MCF 10A (cell line): ENCODE measurements at regions of chr18 and their contacts with region 1.

Region 1: GRCh38 chr18:54444319-54444914 is 86.7 kb downstream of the C18orf54 start:
- DNase-seq: peak; percentile 71
- H3K4me3 Mint-ChIP-seq: no peak overlapping the region
- H3K27ac Mint-ChIP-seq: no peak overlapping the region
- H3K4me1 Mint-ChIP-seq: peaks cover 5% of the 10 kb centered on the region
- H3K27me3 Mint-ChIP-seq: no peaks in the 10 kb centered on the region
- CTCF ChIP-seq: peak; percentile 93

Region 2: DNA sequence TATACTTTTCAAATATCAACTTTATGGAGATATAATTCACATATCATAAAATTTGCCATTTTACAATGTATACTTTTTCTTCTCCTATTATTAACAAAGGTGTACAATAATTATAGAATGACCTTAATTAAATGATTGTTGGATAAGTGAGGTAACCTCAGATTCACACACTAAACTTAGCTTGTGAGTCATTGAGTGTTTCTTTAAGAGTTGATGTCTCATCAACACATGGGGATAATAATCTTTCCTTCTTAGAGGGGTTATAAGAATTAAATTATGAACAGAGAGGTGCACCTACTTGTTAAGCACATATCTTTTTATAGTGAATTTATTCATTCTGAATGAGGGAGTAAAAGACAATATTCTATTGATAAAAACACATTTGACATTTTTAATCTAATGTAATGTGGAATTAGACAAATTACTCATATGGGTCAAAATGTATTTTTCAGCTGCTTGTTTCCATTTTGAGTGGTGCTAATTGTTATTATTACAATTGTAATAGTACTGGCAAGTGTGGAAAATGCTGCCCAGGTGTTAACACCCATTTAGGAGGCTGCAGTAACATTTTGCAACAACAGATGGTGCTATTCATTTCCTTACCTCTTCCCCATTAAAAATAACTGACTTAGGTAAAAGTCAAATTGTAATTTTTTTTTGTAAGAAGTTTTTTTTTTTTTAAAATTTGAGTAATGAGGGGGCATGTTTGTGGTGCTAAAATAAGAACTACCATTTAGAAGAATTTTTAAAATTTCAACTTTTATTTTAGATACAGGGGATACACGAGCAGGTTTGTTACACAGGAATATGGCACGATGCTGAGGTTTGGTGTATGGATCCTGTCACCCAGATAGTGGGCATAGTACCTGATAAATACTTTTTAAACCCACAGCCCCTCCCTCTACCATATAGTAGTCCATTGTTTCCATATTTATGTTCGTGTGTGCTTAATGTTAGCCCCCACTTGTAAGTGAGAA is 114.5 kb after region 1 on chr18:
- CTCF ChIA-PET with region 1: interaction called, 49 read pairs
- POLR2A ChIA-PET with region 1: no interaction called
- intact Hi-C with region 1: loop called (anchors 2 kb)
- DNase-seq: peak; percentile 60
- H3K4me3 Mint-ChIP-seq: no peak overlapping the region
- H3K27ac Mint-ChIP-seq: no peak overlapping the region
- H3K4me1 Mint-ChIP-seq: no peaks in the 10 kb centered on the region
- H3K27me3 Mint-ChIP-seq: no peaks in the 10 kb centered on the region
- CTCF ChIP-seq: peak; percentile 63

Region 3: DNA sequence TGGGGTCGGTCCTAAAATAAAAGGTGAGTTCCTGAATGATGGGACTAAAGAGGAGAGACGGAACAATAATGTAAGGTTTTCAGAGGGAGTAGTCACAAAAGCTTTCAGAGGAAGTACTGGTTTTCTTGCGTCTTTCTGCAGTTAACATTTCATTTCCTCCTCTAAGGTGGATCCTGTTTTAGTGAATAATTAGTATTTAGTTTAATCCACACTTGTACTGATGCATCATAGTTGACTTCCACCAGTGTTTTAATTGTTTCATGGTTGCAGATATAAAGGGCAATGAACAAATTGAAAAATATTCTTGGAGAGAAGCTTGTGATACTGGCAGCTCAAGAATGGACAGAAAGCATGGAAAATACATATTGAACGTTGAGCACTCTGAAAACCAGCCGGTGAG is 146.5 kb after region 1 on chr18 and contains the start of gene DYNAP:
- CTCF ChIA-PET with region 1: no interaction called
- POLR2A ChIA-PET with region 1: no interaction called
- intact Hi-C with region 1: no loop called
- DNase-seq: no peak
- H3K4me3 Mint-ChIP-seq: no peak within 1 kb of the TSS
- H3K27ac Mint-ChIP-seq: no peak within 1 kb of the TSS
- H3K4me1 Mint-ChIP-seq: no peaks in the 10 kb centered on the region
- H3K27me3 Mint-ChIP-seq: peaks cover 1% of the 10 kb centered on the region
- CTCF ChIP-seq: no peak
- total RNA-seq, gene DYNAP: 0.59 and 0.86 TPM in 2 replicates

Region 4: DNA sequence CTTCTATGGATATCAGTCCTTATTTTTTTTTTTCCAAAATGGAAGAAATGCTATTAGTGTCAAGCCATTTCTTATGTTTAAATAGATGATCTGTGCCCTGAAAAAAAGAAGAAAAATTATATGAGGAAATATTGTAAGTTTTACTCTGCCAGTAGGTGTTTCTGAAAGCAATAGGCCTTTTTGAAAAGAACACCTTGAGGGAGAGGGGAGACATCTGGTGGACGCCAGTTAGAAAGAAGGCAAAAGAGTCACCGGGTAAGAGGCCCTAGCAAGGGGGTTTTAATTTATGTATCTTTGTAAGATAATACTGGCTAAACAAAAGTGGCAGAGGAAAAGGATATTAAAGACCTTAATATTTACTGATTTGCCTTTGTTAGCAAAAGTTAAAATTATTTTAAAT is 202.8 kb after region 1 on chr18:
- CTCF ChIA-PET with region 1: interaction called, 8 read pairs
- POLR2A ChIA-PET with region 1: interaction called, 4 read pairs
- intact Hi-C with region 1: loop called (anchors 1 kb)
- DNase-seq: peak; percentile 66
- H3K4me3 Mint-ChIP-seq: no peak overlapping the region
- H3K27ac Mint-ChIP-seq: no peak overlapping the region
- H3K4me1 Mint-ChIP-seq: no peaks in the 10 kb centered on the region
- H3K27me3 Mint-ChIP-seq: no peaks in the 10 kb centered on the region
- CTCF ChIP-seq: peak; percentile 62

Region 5: GRCh38 chr18:54662986-54663385 is 218.6 kb after region 1 on chr18:
- CTCF ChIA-PET with region 1: interaction called, 14 read pairs
- POLR2A ChIA-PET with region 1: no interaction called
- intact Hi-C with region 1: no loop called
- DNase-seq: no peak
- H3K4me3 Mint-ChIP-seq: no peak overlapping the region
- H3K27ac Mint-ChIP-seq: no peak overlapping the region
- H3K4me1 Mint-ChIP-seq: no peaks in the 10 kb centered on the region
- H3K27me3 Mint-ChIP-seq: no peaks in the 10 kb centered on the region
- CTCF ChIP-seq: no peak

Region 6: DNA sequence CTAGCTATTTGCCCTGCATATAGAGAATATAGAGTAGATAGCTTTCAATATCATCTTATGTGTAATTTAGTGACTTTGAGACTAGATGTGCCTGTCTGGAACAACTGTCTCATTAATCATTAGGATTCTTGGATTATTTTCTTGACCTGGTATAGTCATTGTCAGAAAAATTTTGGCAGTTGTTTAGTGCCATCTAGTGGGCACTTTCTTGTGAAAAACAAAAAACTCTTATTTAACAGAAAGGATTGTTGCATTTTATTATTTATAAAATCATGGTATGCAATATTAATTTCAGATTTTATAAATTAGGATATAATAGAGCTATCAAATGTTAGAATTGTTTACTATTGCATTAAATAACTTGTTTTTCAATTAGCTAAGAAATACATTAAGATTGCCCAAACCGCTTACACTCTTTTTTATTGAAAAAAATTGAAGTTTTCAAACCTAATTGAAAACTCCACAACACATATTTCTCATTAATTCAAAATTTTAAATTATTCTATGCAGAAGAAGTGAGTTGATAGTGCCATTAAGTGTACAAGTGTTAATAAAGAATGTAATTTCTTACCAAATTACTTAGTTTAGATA is 227.0 kb after region 1 on chr18:
- CTCF ChIA-PET with region 1: interaction called, 82 read pairs
- POLR2A ChIA-PET with region 1: interaction called, 3 read pairs
- intact Hi-C with region 1: loop called (anchors 1 kb)
- DNase-seq: peak; percentile 59
- H3K4me3 Mint-ChIP-seq: no peak overlapping the region
- H3K27ac Mint-ChIP-seq: no peak overlapping the region
- H3K4me1 Mint-ChIP-seq: no peaks in the 10 kb centered on the region
- H3K27me3 Mint-ChIP-seq: no peaks in the 10 kb centered on the region
- CTCF ChIP-seq: peak; percentile 49

Region 7: DNA sequence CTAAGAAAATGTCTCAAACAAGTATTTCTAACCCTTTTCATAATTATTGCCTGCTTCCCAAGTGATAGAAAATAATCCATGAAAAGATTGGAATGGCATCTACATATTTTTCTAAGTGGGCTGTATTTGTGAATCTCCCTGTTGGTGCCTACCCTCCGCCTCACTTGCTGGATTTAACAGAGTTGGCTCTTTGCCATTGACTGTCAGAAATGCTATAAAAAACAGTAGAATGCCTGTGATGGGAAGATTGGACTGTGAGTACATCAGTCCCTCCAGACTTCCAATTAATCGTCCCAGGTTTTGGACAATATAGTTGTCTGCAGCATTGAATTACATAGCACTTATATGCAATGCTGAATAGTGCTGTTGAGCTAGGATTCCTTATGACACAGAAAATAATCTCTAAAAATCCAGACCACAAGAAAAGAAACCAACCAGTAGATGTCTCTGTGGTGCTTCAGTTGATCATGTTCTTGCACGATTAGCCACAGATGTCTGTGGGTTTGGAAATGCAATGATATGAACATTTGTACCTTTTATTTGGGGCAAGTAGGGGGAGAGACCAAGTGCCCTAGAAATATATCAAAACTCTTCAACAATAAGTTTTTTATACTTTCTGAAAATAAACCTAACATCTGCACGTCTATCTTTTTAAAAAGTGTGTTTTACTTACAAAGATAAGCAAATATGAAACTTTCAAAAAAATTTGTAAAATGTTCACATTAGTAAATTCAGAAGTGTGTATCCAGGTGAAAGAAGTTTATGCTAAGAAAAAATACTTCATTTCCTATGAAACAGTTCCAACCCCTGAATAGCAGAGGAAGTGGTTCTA is 235.1 kb after region 1 on chr18:
- CTCF ChIA-PET with region 1: interaction called, 10 read pairs
- POLR2A ChIA-PET with region 1: no interaction called
- intact Hi-C with region 1: no loop called
- DNase-seq: peak; percentile 82
- H3K4me3 Mint-ChIP-seq: no peak overlapping the region
- H3K27ac Mint-ChIP-seq: no peak overlapping the region
- H3K4me1 Mint-ChIP-seq: peaks cover 7% of the 10 kb centered on the region
- H3K27me3 Mint-ChIP-seq: no peaks in the 10 kb centered on the region
- CTCF ChIP-seq: peak; percentile 66

Region 8: DNA sequence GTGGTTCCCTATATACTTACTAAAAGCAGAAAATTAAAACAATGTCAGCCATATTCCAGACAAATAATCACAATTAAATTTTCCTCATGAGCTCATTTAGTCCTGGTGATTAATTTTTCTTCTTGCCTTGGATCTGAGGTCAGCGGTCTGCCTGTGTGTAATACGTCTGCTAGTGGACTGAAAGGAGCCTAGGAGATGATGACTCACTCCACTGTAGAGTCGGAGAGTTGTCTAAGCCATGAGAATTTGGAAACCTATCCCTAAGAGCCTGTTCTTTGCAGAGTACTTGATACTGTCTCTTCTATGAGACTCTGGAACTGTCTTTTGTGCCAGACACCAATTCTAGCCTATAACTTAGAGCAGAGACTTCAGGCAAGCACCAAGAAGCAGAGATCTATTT is 289.6 kb after region 1 on chr18:
- CTCF ChIA-PET with region 1: no interaction called
- POLR2A ChIA-PET with region 1: no interaction called
- intact Hi-C with region 1: no loop called
- DNase-seq: peak; percentile 91
- H3K4me3 Mint-ChIP-seq: no peak overlapping the region
- H3K27ac Mint-ChIP-seq: peak overlapping the region; percentile 61
- H3K4me1 Mint-ChIP-seq: peaks cover 15% of the 10 kb centered on the region
- H3K27me3 Mint-ChIP-seq: no peaks in the 10 kb centered on the region
- CTCF ChIP-seq: no peak